ENCODE measurements at regions of chrX and their contacts with region 1.

Region 1: DNA sequence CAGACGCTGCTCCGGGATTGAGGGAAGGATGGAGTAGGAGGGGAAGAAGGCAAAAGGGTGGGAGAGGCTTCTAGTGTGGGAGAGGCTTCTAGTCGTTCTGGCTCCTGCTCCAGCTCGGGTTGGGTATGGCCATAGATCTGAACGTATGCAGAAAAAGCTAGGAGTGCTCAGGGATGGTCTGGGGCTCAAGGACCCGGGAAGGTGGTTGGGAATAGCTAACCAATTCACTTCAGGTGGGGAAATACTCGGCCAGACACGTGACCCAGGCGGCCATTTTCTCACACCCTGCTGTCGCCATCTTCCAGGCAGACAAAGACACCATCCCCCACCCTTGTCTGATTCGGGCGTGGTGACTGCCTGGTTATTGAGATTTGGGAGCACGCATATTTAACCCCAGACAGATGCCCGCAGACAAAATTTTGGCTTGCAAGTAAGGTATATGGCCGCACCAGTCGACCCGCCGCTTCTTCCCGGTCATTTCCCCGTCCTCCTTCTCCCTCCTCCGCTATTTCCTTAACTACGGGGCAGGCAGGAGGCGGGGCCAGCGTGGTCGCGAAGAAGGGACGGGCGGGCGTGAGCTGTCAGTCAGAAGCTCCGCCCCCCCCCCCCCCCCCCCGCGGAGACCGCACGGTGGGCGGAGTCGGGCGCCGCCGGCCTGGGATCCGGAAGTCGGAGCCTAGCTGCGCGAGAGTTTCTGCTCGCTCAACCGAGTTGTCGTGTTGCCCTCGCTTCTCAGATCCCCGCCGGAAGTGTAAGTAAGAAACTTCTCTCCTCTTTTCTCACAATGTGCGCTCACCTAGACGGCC is at the start of gene GNL3L:
- DNase-seq: peak; percentile 56 to 90 (median 79)
- ATAC-seq: peak; percentile 84
- H3K4me3 ChIP-seq: peak within 1 kb of the TSS; percentile 76
- H3K4me3 Mint-ChIP-seq: peak within 1 kb of the TSS; percentile 99
- H3K27ac ChIP-seq: peak within 1 kb of the TSS; percentile 64 to 90
- H3K27ac Mint-ChIP-seq: peak within 1 kb of the TSS; percentile 94
- H3K4me1 ChIP-seq: peaks cover 38% of the 10 kb centered on the region
- H3K4me1 Mint-ChIP-seq: peaks cover 44% of the 10 kb centered on the region
- H3K27me3 ChIP-seq: no peaks in the 10 kb centered on the region
- H3K27me3 Mint-ChIP-seq: no peaks in the 10 kb centered on the region
- CTCF ChIP-seq: no peak
- total RNA-seq, gene GNL3L: 21.5 to 22.8 TPM

Region 2: GRCh38 chrX:54695816-54696575 is 166.2 kb after region 1 on chrX:
- CTCF ChIA-PET with region 1: no interaction called
- POLR2A ChIA-PET with region 1: no interaction called
- intact Hi-C with region 1: no loop called
- DNase-seq: no peak
- ATAC-seq: no peak
- H3K4me3 ChIP-seq: no peak overlapping the region
- H3K4me3 Mint-ChIP-seq: no peak overlapping the region
- H3K27ac ChIP-seq: no peak overlapping the region
- H3K27ac Mint-ChIP-seq: no peak overlapping the region
- H3K4me1 ChIP-seq: no peaks in the 10 kb centered on the region
- H3K4me1 Mint-ChIP-seq: no peaks in the 10 kb centered on the region
- H3K27me3 ChIP-seq: no peaks in the 10 kb centered on the region
- H3K27me3 Mint-ChIP-seq: no peaks in the 10 kb centered on the region
- CTCF ChIP-seq: no peak

Region 3: DNA sequence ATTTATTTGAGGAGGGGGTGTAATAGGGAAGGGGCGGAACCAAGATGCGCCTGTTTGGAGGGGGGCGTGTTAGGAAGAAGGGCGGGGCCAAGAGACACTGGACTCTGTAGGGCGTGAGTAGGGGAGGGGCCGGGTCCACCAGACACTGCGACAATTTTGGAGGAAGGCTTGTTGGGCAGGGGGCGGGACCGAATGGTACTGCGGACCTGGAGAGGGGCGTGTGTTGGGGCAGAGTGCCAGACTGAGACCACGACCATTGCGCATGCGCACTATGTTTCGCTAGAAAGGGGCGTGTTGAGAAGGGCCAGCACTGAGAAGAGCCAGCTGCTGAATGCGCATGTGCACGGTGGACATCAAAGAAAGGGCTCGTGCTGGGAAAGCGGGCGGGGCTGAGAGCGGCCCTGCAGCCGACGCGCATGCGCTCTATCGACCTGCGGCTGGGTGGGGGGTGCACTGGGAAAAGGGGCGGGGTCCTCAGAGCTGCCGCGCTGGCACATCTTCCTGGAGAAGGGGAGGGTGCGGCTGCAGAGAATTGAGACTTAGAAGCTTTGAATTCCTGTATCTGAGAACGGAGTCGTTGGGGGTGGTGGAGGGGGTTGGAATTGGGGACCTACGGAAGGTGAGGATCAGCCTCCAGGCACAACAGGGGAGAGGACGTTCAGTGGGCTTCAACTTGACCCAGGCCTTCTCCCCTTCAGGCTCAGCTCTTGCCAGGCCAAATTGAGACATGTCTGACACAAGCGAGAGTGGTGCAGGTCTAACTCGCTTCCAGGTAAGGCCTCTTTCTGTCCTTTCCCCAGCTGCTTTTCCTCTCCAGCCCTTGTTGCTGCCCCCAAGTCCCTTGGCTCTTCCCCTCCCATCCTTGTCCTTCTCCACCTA is 279.1 kb after region 1 on chrX:
- CTCF ChIA-PET with region 1: no interaction called
- POLR2A ChIA-PET with region 1: interaction called, 9 read pairs
- intact Hi-C with region 1: loop called in 1 of 2 experiments (anchors 5 kb)
- DNase-seq: peak; percentile 75 to 97 (median 84)
- ATAC-seq: peak; percentile 70
- H3K4me3 ChIP-seq: peak overlapping the region; percentile 93
- H3K4me3 Mint-ChIP-seq: peak overlapping the region; percentile 95
- H3K27ac ChIP-seq: peak overlapping the region; percentile 65 to 88
- H3K27ac Mint-ChIP-seq: peak overlapping the region; percentile 98
- H3K4me1 ChIP-seq: peaks cover 25% of the 10 kb centered on the region
- H3K4me1 Mint-ChIP-seq: peaks cover 24% of the 10 kb centered on the region
- H3K27me3 ChIP-seq: no peaks in the 10 kb centered on the region
- H3K27me3 Mint-ChIP-seq: no peaks in the 10 kb centered on the region
- CTCF ChIP-seq: no peak